Gastrocnemius medialis (tissue), 4 donors: ENCODE measurements at regions of chr6 and their contacts with region 1.

Region 1: DNA sequence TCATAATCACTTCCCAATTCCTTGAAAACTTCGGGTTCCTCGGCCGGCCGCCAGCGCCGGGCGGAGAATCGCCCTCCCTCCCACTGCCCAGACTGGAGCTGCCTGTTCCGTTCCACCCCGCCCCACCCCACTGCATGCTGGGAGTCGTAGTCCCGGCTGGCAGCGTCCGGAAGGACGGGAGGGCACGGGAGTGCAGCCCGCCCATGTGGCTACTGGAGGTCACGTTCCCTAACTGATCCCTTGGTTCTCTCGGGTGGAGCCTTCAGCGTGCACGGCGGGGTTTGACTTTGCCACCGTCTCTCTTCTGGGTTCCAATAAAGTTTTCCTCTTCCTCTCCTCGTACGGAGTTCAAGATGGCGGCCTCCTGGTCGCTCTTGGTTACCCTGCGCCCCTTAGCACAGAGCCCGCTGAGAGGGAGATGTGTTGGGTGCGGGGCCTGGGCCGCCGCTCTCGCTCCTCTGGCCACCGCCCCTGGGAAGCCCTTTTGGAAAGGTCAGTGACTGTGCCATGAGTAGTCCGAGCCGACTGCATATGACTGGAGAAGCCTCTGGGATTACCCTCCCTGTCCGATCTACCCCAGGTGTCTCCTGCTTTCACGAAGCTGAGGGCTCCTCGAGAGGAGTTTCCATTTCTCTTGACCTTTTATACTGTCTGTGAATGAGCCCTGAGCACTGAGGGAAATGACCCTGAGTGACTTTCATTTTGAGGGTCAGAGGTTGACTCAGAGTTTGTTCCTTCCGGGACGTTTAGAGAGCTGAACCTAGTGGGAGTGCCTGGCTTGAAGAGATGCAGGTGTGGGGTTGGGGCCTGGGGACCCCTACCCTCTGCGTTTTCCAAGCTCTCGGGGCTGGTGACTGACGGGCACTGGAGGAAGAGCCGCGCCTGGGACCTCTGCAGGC is at the start of gene AFG1L:
- DNase-seq: peak; percentile 92
- ATAC-seq: peak; percentile 95 to 97
- H3K4me3 ChIP-seq: peak within 1 kb of the TSS; percentile 79 to 91 (median 82)
- H3K27ac ChIP-seq: peak within 1 kb of the TSS; percentile 88 to 96 (median 92)
- H3K4me1 ChIP-seq: peaks cover 19% of the 10 kb centered on the region in 2 donors
- H3K27me3 ChIP-seq: no peaks in the 10 kb centered on the region
- CTCF ChIP-seq: no peak
- POLR2A ChIP-seq: peak; percentile 65 to 68
- total RNA-seq, gene AFG1L: 2.1 to 7.0 (median 2.6) TPM

Region 2: GRCh38 chr6:109117346-109118035 is 822.5 kb after region 1 on chr6:
- in situ Hi-C with region 1: loop called in 1 of 4 experiments (anchors 25 kb)
- intact Hi-C with region 1: no loop called
- DNase-seq: no peak
- ATAC-seq: peak in 1 of 2 donors; percentile 23
- H3K4me3 ChIP-seq: no peak overlapping the region
- H3K27ac ChIP-seq: no peak overlapping the region
- H3K4me1 ChIP-seq: peaks cover 26 to 46% of the 10 kb centered on the region in 2 donors
- H3K27me3 ChIP-seq: no peaks in the 10 kb centered on the region
- CTCF ChIP-seq: no peak
- POLR2A ChIP-seq: no peak